Endothelial cell of umbilical vein (primary cell): ENCODE measurements at regions of chr3 and their contacts with region 1.

Region 1: DNA sequence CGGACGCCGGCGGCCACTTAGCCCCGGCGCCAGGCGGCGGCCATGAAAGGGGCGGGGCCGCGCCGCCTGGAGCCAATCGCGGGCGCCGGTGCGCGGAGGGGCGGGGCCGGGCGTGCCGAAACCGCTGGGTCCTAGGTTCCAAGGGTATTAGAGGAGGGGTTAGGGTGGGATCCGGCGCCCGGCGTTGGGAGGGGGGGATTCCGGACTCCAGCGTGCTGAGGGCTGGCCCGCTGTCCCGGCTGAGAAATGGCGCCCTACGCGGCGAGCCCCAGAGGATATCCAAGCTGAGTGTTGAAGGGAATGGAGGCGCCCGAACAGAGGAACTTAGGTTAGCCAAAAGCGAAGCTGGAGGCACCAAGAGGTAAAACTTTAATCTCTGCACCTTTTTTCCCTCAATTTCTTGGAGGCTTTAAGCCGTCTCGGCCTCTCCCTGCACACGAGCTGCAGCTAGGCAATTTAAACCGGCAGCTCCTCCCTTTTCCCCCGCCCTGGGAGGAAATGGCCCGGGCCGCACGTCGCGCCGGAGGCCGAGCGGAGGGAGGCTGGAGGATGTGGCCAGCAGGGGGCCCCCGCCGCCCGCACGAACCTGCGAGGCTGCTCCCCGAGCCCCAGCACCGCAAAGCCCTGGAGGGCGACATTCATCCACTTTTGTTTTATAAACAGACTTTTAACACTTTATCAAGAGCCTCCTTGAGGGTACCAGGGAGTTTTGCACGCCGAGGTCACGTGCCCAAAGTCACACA is at the start of gene XXYLT1:
- DNase-seq: peak; percentile 93
- H3K4me3 ChIP-seq: peak within 1 kb of the TSS; percentile 79 to 91 (median 79)
- H3K27ac ChIP-seq: peak within 1 kb of the TSS; percentile 68
- H3K4me1 ChIP-seq: peaks cover 23% of the 10 kb centered on the region
- H3K27me3 ChIP-seq: no peaks in the 10 kb centered on the region
- CTCF ChIP-seq: peak; percentile 94 to 98
- POLR2A ChIP-seq: peak; percentile 84
- total RNA-seq, gene XXYLT1: 58.6 and 78.1 TPM in 2 replicates

Region 2: GRCh38 chr3:195286115-195286872 is 15.0 kb after region 1 on chr3:
- CTCF ChIA-PET with region 1: interaction called, 21 read pairs
- POLR2A ChIA-PET with region 1: no interaction called
- dilution Hi-C with region 1: no loop called
- intact Hi-C with region 1: no loop called
- DNase-seq: peak; percentile 53
- H3K4me3 ChIP-seq: no peak overlapping the region
- H3K27ac ChIP-seq: peak overlapping the region; percentile 35
- H3K4me1 ChIP-seq: peaks cover 15% of the 10 kb centered on the region
- H3K27me3 ChIP-seq: no peaks in the 10 kb centered on the region
- CTCF ChIP-seq: no peak
- POLR2A ChIP-seq: no peak

Region 3: DNA sequence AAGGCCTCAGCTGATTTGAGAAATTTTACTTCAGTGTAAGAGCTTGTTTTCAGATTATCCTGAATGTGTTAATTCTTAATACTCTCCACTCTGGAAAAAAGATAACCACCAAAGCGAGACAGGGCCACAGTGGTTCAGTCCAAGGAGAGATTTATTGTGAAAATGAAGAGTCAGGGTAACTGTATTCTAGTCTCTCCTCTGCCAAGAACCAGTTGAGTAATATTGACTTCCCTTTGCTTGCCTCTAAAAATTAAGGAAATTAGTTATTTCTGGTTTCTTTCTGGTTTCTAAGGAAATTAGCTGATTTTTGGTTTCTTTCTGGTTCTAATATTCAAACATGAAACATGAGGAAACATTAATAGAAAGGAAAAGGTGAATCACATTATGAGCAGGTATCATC is 236.9 kb after region 1 on chr3:
- CTCF ChIA-PET with region 1: interaction called, 14 read pairs
- POLR2A ChIA-PET with region 1: interaction called, 3 read pairs
- dilution Hi-C with region 1: no loop called
- intact Hi-C with region 1: no loop called
- DNase-seq: peak; percentile 0
- H3K4me3 ChIP-seq: no peak overlapping the region
- H3K27ac ChIP-seq: no peak overlapping the region
- H3K4me1 ChIP-seq: no peaks in the 10 kb centered on the region
- H3K27me3 ChIP-seq: no peaks in the 10 kb centered on the region
- CTCF ChIP-seq: no peak
- POLR2A ChIP-seq: no peak

Region 4: DNA sequence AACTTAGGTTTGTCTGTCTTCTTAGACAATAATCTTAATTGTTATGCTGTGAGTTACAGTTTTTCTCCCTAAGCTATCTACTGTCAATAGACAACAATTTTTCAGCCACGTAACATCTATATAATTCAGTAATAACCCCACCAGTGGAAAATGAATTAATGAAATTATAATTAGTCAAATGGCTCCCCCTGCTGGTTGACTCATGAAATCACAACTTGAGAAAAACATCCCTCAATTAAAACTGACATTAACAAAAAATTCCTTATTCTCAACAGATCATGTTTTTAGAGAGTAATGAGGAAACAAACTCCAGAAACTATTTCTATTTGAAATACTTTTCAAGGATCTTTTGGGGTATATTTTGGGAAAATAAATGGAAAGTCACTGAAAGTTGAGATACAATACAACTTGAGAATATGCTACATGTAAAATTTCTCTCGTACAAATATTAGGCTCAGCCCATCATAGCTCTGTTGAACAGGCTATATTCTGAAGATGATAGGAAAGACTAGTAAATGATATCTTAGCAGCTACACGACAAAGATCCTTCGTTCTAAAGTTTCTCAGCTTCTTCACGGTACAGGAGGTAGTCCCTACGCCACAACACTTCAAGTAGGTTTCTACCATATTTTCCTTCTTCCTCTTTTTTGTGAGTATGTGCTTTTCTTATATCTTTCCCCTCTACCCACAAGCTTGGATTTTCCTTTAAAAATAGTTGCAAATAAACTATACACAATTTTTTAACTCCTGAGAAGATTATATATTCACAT is 251.2 kb after region 1 on chr3:
- CTCF ChIA-PET with region 1: interaction called, 195 read pairs
- POLR2A ChIA-PET with region 1: no interaction called
- dilution Hi-C with region 1: no loop called
- intact Hi-C with region 1: loop called (anchors 1 kb)
- DNase-seq: peak; percentile 38
- H3K4me3 ChIP-seq: no peak overlapping the region
- H3K27ac ChIP-seq: no peak overlapping the region
- H3K4me1 ChIP-seq: no peaks in the 10 kb centered on the region
- H3K27me3 ChIP-seq: no peaks in the 10 kb centered on the region
- CTCF ChIP-seq: peak; percentile 22 to 34
- POLR2A ChIP-seq: no peak

Region 5: DNA sequence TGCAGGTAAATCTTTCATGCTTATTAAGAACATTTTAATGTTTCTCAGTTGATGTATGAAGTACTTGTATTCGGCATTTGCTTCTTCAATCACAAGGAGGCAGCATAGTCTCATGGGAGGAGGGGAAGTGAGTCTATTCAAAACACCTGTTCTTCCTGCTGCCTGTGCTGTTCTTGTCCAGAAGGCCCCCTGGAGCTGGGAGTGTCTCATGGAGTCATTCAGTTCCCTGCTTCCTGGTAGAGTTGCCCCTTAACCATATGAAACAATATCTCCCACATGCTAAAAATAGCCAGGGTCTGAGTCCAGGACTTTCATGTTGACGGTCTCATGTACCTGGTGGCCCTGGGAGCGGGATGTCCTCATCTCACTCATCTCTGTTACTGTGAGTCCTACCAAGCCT is 287.3 kb after region 1 on chr3:
- CTCF ChIA-PET with region 1: no interaction called
- POLR2A ChIA-PET with region 1: no interaction called
- dilution Hi-C with region 1: no loop called
- intact Hi-C with region 1: no loop called
- DNase-seq: peak; percentile 30
- H3K4me3 ChIP-seq: no peak overlapping the region
- H3K27ac ChIP-seq: no peak overlapping the region
- H3K4me1 ChIP-seq: no peaks in the 10 kb centered on the region
- H3K27me3 ChIP-seq: peaks cover 0 to 23% of the 10 kb centered on the region in 2 experiments
- CTCF ChIP-seq: peak in 1 of 2 donors; percentile 7
- POLR2A ChIP-seq: no peak